Activated naive CD4-positive, alpha-beta T cell treated with anti-CD3 and anti-CD28 coated beads for 36 hours (primary cell): ENCODE measurements at regions of chr17 and their contacts with region 1.

Region 1: DNA sequence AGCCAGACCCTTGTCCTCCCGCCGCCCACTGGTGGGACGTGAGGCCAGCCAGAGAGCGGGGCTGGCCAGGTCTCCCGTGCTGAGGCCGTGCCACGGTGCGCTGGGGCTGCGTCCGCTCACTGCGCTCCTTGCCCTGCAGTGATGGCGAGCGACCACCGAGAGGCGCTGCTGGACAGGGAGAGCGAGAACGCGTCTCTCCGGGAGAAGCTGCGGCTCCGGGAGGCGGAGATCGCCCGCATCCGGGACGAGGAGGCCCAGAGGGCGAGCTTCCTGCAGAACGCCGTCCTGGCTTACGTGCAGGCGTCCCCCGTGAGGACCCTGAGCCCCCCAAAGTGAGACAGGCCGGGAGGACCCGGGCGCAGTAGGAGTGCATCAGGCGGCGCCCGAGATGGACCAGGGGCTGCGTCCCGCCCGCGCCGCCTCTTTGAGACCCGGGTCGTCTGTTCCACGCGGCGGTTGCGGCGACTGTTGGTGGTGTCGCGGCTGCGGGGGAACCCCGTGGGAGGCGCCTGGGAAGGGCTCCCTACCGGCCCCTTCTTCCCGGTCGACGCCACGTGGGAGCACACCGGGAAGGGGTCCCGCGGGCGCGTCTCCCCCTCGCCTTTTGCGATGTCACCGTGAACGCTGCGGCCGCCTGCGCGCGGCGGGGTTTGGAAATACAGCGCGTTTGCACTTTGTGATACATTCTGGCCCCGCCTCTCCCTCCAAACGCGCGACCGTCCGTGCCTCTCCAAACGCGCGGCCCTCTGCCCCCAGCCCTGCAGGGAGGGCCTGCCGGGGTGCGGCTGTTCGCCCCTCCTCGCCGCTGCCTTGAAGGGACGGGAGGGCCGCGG is 792 bp upstream of the RAC3 start:
- DNase-seq: peak; percentile 90
- H3K4me3 Mint-ChIP-seq: peak overlapping the region; percentile 76
- H3K27ac Mint-ChIP-seq: no peak overlapping the region
- H3K4me1 Mint-ChIP-seq: peaks cover 8% of the 10 kb centered on the region
- H3K27me3 Mint-ChIP-seq: no peaks in the 10 kb centered on the region

Region 2: GRCh38 chr17:81927653-81928543 is 102.8 kb before region 1 on chr17 and contains the start of gene MAFG:
- CTCF ChIA-PET with region 1: no interaction called
- intact Hi-C with region 1: no loop called
- DNase-seq: peak; percentile 88
- H3K4me3 Mint-ChIP-seq: peak within 1 kb of the TSS; percentile 76
- H3K27ac Mint-ChIP-seq: peak within 1 kb of the TSS; percentile 86
- H3K4me1 Mint-ChIP-seq: peaks cover 26% of the 10 kb centered on the region
- H3K27me3 Mint-ChIP-seq: peaks cover 5% of the 10 kb centered on the region
- total RNA-seq, gene MAFG: 13.5 to 14.8 TPM

Region 3: GRCh38 chr17:82056729-82057621 is 26.3 kb after region 1 on chr17:
- CTCF ChIA-PET with region 1: no interaction called
- intact Hi-C with region 1: no loop called
- DNase-seq: no peak
- H3K4me3 Mint-ChIP-seq: no peak overlapping the region
- H3K27ac Mint-ChIP-seq: no peak overlapping the region
- H3K4me1 Mint-ChIP-seq: peaks cover 13% of the 10 kb centered on the region
- H3K27me3 Mint-ChIP-seq: no peaks in the 10 kb centered on the region

Region 4: DNA sequence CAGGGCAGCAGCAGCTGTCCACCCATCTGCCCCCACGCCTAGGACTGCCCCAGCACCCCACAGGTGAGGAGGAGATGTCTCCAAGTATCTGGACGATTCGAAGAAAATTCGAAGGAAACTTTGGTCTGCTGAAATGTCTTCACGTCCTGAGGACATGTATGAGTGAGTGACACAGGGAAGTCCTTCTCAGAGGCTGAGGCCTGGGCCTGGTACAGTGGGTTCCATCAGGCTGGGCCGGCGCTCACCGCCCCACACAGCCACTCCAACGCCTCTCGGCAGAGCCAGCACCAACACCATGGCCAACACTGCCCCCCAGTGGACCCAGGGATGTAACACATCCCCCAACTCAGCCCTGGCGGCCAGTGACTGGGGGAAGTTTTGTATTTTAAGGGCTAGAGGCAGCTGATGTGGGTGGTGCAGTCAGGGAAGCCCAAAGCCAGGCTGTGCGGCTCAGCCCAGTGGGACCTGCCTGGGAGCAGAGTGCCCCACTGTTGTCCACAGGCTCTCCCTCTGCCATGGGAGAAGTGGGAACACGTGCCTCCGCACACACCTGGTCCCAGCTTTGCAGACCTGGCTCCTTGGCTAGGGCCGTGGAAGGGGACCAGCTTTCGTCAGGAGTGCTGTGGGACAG is 123.2 kb after region 1 on chr17:
- CTCF ChIA-PET with region 1: interaction called, 21 read pairs
- intact Hi-C with region 1: loop called (anchors 1 kb)
- DNase-seq: peak; percentile 88
- H3K4me3 Mint-ChIP-seq: no peak overlapping the region
- H3K27ac Mint-ChIP-seq: no peak overlapping the region
- H3K4me1 Mint-ChIP-seq: peaks cover 7% of the 10 kb centered on the region
- H3K27me3 Mint-ChIP-seq: no peaks in the 10 kb centered on the region

Region 5: GRCh38 chr17:82302991-82303943 is 272.6 kb after region 1 on chr17:
- CTCF ChIA-PET with region 1: no interaction called
- intact Hi-C with region 1: no loop called
- DNase-seq: peak; percentile 58
- H3K4me3 Mint-ChIP-seq: peak overlapping the region; percentile 93
- H3K27ac Mint-ChIP-seq: peak overlapping the region; percentile 100
- H3K4me1 Mint-ChIP-seq: peaks cover 79% of the 10 kb centered on the region
- H3K27me3 Mint-ChIP-seq: no peaks in the 10 kb centered on the region